ENCODE measurements at regions of chr15 and their contacts with region 1.

Region 1: DNA sequence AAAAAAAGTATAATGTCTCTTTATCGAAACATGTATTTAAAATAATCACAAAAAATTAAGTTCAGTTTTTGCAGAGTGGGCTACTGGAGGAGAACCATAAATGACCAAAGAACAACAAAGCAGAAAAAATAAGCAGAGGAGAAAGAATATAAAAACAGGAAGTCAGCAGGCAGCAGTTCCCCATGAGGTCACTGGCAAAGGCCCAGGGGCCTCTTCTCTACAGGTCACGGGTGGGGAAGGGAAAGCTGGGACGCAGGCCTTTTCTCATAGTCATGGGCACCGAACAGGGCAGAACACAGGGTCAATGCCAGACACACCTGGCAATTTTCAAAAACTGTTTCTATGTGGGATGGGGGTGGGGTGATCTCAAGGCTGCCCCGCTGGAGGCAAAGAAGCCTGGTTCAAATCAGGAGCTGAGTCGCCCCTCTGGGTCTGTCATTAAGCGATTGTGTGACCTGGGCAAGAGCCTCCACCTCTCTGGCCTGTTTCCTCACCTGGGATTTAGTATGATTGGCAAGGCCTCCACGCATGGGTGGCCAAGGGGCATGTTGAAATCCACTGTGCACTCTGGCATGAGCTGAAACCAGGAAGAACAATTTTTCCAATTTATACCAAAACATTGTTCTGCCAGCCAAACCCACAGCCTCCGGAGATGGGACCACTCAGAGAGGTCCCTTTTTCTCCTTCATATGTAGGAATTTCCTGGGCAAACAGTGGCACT is 43.8 kb upstream of the UACA start:
- DNase-seq: no peak
- H3K4me3 ChIP-seq: no peak overlapping the region
- CTCF ChIP-seq: no peak

Region 2: DNA sequence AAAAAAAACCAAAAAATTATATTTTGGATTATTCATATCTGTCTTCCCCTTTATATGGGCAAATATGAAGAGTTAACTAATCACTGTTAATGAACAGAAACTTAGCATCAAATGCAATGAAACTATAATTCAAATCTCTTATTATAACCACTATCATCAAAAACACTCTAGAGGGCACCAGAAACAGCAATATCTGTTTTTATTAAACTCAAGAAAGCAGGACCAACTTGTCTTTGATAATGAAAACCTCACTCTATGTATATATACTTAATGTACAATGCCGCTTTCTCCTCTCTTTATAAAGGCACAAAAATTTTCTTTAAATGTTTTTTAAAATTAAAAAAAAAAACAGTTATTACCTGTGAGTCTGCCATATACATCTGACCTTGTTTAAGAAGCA is 136.5 kb before region 1 on chr15:
- CTCF ChIA-PET with region 1: interaction called, 22 read pairs
- POLR2A ChIA-PET with region 1: no interaction called
- DNase-seq: no peak
- H3K4me3 ChIP-seq: no peak overlapping the region
- CTCF ChIP-seq: no peak

Region 3: GRCh38 chr15:70701891-70702568 is 105.1 kb before region 1 on chr15:
- CTCF ChIA-PET with region 1: interaction called, 27 read pairs
- POLR2A ChIA-PET with region 1: no interaction called
- DNase-seq: no peak
- H3K4me3 ChIP-seq: peak overlapping the region; percentile 29
- CTCF ChIP-seq: no peak

Region 4: GRCh38 chr15:70748281-70748747 is 58.8 kb before region 1 on chr15:
- CTCF ChIA-PET with region 1: interaction called, 11 read pairs
- POLR2A ChIA-PET with region 1: no interaction called
- DNase-seq: no peak
- H3K4me3 ChIP-seq: no peak overlapping the region
- CTCF ChIP-seq: no peak

Region 5: GRCh38 chr15:70788114-70789049 is 18.8 kb before region 1 on chr15:
- CTCF ChIA-PET with region 1: interaction called, 30 read pairs
- POLR2A ChIA-PET with region 1: no interaction called
- DNase-seq: no peak
- H3K4me3 ChIP-seq: no peak overlapping the region
- CTCF ChIP-seq: no peak

Region 6: DNA sequence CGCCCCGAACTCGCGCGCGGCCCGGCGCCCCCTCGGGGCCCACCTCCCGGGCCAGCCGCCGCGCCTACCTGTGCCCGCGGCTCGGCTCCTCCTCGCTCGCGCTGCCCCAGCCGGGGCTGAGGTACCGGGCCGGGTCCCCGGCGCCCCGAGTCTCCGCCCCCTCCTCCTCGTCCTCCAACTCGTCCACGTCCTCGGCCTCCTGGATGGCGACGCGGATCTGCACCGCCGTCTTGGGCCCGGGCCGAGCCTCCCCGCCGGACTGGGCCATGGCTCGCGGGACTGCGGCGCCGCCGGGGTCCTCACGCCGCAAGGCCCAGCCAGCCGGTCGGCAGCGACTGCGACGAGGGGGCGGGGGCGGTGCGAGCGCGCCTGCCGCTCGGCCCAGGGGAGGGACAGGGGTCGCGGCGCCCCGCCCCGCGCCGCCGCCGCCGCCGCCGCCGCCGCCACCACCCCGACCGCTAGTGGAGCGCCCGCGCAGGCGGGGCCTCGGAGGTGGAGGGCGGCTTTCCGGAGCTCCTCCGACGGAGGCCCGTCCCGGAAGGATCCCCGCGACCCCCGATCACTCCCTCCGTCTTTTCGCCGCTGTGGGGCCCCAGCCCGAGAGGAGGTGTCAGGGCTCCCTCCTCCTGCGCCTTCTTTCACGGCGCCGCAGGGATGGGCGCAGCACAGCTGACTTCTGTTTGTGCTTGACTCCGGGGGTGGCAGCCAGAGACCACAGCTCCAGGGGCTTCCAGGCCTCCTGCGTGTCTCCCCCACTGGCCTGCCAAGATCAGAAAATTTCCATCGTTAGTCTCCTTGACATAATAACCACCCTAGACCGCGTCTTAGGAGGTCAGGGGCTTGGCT is 46.9 kb after region 1 on chr15 and contains the start of gene LARP6:
- CTCF ChIA-PET with region 1: interaction called, 10 read pairs
- POLR2A ChIA-PET with region 1: no interaction called
- DNase-seq: no peak
- H3K4me3 ChIP-seq: peak within 1 kb of the TSS; percentile 89
- CTCF ChIP-seq: no peak

Region 7: GRCh38 chr15:70956201-70956995 is 149.2 kb after region 1 on chr15:
- CTCF ChIA-PET with region 1: no interaction called
- POLR2A ChIA-PET with region 1: no interaction called
- DNase-seq: no peak
- H3K4me3 ChIP-seq: no peak overlapping the region
- CTCF ChIP-seq: no peak